ENCODE measurements at regions of chr1 and their contacts with region 1.

Region 1: GRCh38 chr1:12658531-12659453 is 14.9 kb downstream of the AADACL4 start:
- DNase-seq: peak; percentile 83
- ATAC-seq: peak; percentile 94
- H3K4me3 ChIP-seq: no peak overlapping the region
- H3K27ac ChIP-seq: no peak overlapping the region
- H3K4me1 ChIP-seq: peaks cover 21% of the 10 kb centered on the region
- H3K27me3 ChIP-seq: peaks cover 5 to 9% of the 10 kb centered on the region in 2 experiments; a peak in 3 of 5 replicates
- CTCF ChIP-seq: peak; percentile 97
- EP300 ChIP-seq: no peak
- POLR2A ChIP-seq: no peak
- RAD21 ChIP-seq: peak; percentile 91

Region 2: DNA sequence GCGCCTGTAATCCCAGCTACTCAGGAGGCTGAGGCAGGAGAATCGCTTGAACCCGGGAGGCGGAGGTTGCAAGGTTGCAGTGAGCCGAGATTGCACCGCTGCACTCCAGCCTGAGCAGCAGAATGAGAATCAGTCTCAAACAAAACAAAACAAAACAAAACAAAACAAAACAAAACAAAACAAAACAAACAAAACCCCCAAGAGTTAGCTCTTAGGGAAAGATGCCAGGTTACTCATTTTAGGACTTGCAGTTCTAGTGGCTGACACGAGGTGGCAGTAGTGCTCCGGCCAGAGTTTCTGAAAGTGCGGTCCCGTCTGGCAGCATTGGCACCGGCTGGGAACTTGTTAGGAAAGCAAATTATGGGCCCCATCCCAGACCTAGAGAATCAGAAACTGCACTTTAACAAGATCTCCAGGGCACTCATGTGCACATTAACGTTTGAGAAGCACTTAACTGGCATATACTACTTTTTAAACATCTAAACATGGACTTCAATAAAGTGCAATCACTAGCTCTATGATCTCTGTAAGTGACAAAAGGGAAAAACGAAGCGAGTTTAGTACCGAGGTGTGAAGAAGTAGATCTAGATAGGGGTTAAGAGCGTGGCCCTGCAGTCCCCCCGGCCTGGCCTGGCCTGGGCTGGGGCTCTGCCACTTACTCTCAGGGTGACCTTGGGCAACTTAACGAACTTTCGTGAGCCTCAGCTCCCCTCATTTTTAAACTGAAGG is 533.9 kb before region 1 on chr1:
- CTCF ChIA-PET with region 1: no interaction called
- POLR2A ChIA-PET with region 1: no interaction called
- in situ Hi-C with region 1: loop called (anchors 25 kb)
- intact Hi-C with region 1: no loop called
- DNase-seq: peak; percentile 46
- ATAC-seq: peak; percentile 53
- H3K4me3 ChIP-seq: no peak overlapping the region
- H3K27ac ChIP-seq: no peak overlapping the region
- H3K4me1 ChIP-seq: peaks cover 7% of the 10 kb centered on the region
- H3K27me3 ChIP-seq: peaks cover 5 to 25% of the 10 kb centered on the region in 2 experiments
- CTCF ChIP-seq: peak; percentile 88
- EP300 ChIP-seq: no peak
- POLR2A ChIP-seq: no peak
- RAD21 ChIP-seq: peak; percentile 89

Region 3: DNA sequence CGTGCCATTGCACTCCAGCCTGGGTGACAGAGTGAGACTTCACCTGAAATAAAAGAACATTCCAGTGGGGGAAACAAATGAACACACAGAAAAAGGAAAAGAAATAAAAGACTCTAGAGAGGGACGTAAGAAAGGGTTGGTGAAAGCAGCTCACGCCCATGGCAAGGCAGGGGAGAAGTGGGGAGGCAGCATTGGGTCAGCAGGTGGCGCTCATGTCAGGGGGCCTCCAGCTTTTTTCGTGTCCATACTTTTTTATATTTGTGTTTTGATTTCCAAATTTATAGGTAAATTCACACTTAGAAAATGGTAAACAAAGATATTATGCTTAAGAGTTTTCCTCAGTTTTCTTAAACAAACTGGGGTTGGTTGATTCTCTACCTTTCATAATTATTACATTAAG is 383.4 kb before region 1 on chr1:
- CTCF ChIA-PET with region 1: interaction called, 19 read pairs
- POLR2A ChIA-PET with region 1: no interaction called
- in situ Hi-C with region 1: loop called (anchors 10 kb)
- intact Hi-C with region 1: no loop called
- DNase-seq: peak; percentile 6
- ATAC-seq: no peak
- H3K4me3 ChIP-seq: no peak overlapping the region
- H3K27ac ChIP-seq: no peak overlapping the region
- H3K4me1 ChIP-seq: no peaks in the 10 kb centered on the region
- H3K27me3 ChIP-seq: no peaks in the 10 kb centered on the region
- CTCF ChIP-seq: peak; percentile 69
- EP300 ChIP-seq: no peak
- POLR2A ChIP-seq: no peak
- RAD21 ChIP-seq: peak; percentile 36; the same call in 1 of the 2 replicates

Region 4: DNA sequence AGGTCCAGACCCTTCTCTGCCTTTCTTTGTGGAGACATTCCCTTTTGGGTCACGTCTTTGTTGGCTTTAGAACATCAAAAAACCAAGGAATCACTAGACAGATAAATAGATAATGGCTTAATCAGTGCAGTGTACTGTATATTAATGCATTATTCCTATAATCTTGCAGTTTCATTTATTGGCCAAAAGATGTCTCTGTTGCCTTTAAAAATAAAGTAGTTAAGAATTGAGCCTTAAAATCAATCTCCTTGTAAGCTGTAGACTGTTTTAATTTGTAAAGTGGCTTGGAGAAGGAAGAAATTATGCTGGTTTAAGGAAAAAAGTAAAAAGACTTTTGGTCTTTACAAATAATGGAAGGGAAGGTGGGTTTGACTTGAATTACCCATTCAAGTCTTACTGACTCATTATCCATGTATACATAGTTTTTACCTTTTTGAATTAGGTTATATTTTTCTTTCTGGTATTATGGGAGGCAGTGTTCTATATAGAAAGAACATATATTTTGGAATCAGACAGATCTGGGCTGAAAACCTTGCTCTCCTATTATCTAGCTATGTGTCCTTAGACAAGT is 344.4 kb before region 1 on chr1:
- CTCF ChIA-PET with region 1: interaction called, 25 read pairs
- POLR2A ChIA-PET with region 1: no interaction called
- in situ Hi-C with region 1: loop called (anchors 5 kb)
- intact Hi-C with region 1: loop called (anchors 2 kb)
- DNase-seq: peak; percentile 12
- ATAC-seq: no peak
- H3K4me3 ChIP-seq: no peak overlapping the region
- H3K27ac ChIP-seq: no peak overlapping the region
- H3K4me1 ChIP-seq: peaks cover 5% of the 10 kb centered on the region
- H3K27me3 ChIP-seq: no peaks in the 10 kb centered on the region
- CTCF ChIP-seq: peak; percentile 58
- EP300 ChIP-seq: no peak
- POLR2A ChIP-seq: no peak
- RAD21 ChIP-seq: 0 out of 2 replicates have a peak, but pooled peaks have one; percentile 37

Region 5: DNA sequence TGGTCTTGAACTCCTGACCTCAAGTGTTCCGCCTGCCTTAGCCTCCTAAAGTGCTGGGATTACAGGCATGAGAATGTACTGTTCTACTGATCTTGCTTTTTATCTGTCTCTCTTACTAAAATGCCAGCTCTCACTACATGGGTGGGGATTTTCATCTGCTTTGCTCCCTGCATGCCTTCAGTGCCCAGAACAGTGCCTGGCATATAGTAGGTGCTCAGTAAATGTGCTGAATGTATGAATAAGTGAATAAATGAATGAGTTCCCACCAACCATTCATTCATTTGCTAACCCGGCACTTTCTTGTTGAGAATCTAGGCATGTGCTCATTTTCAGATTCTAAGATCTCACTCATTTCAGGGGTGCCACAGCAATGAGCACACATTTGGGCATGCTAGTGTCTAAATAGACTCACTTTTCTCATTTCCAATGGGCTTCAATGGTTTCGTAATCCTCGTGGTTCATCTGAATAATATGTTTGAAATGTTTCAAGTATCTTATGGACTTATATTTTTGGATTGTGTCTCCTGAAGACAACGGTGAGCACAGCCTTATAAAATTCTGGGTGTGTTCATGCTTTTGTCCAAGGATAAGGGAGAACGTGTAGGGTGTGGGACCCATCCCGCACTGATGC is 48.4 kb before region 1 on chr1:
- CTCF ChIA-PET with region 1: no interaction called
- POLR2A ChIA-PET with region 1: no interaction called
- in situ Hi-C with region 1: no loop called
- intact Hi-C with region 1: no loop called
- DNase-seq: no peak
- ATAC-seq: no peak
- H3K4me3 ChIP-seq: no peak overlapping the region
- H3K27ac ChIP-seq: no peak overlapping the region
- H3K4me1 ChIP-seq: peaks cover 93% of the 10 kb centered on the region
- H3K27me3 ChIP-seq: no peaks in the 10 kb centered on the region; a peak in 1 of 5 replicates
- CTCF ChIP-seq: no peak
- EP300 ChIP-seq: no peak
- POLR2A ChIP-seq: peak; percentile 15 to 53; a peak in 2 of 4 replicates
- RAD21 ChIP-seq: no peak